ENCODE measurements at regions of chr12 and their contacts with region 1.

Region 1: DNA sequence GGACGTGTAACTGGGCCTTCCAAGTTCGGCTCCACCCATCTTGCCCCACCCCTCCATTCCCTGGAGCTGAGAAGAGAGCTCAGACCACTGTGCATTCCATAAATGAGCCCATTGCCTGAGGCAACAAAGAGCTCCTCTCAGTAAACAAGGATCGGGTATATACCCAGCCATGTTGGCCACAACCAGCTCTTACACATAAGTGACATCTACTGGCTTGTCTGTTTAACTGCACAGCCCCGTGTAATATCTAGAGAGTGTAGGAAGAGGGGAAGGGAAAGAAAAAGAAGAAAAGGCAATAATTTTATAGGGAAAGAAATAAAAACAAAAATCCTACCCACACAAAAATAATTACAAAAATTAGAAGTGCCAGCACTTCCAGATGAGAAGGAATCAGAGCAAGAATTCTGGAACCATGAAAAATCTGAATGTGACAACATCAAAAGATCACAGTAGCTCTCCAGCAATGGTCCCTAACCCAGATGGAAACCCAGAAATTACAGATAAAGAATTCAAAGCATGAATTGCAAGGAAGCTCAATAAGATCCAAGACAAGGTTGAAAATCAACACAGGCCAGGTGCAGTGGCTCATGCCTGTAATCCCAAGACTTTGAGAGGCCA is 308.1 kb downstream of the RPAP3 start:
- DNase-seq: peak; percentile 14 to 69 (median 56)
- H3K4me3 ChIP-seq: peak overlapping the region; percentile 17
- H3K4me3 Mint-ChIP-seq: peak overlapping the region in 6 of 7 donors; percentile 60 to 84 (median 72)
- H3K27ac ChIP-seq: no peak overlapping the region
- H3K27ac Mint-ChIP-seq: peak overlapping the region; percentile 76 to 99 (median 95)
- H3K4me1 ChIP-seq: peaks cover 38% of the 10 kb centered on the region
- H3K4me1 Mint-ChIP-seq: peaks cover 46 to 62% (median 56%) of the 10 kb centered on the region in 3 donors
- H3K27me3 ChIP-seq: no peaks in the 10 kb centered on the region
- H3K27me3 Mint-ChIP-seq: no peaks in the 10 kb centered on the region

Region 2: GRCh38 chr12:47032644-47033043 is 365.1 kb before region 1 on chr12:
- CTCF ChIA-PET with region 1: interaction called, 72 read pairs
- POLR2A ChIA-PET with region 1: interaction called, 4 read pairs
- DNase-seq: peak in 2 of 5 donors; percentile 55 to 56
- H3K4me3 ChIP-seq: no peak overlapping the region
- H3K4me3 Mint-ChIP-seq: no peak overlapping the region
- H3K27ac ChIP-seq: no peak overlapping the region
- H3K27ac Mint-ChIP-seq: peak overlapping the region in 1 of 8 donors; percentile 20
- H3K4me1 ChIP-seq: peaks cover 4% of the 10 kb centered on the region
- H3K4me1 Mint-ChIP-seq: peaks cover 17 to 19% (median 19%) of the 10 kb centered on the region in 3 donors
- H3K27me3 ChIP-seq: no peaks in the 10 kb centered on the region
- H3K27me3 Mint-ChIP-seq: peaks cover 1 to 3% of the 10 kb centered on the region in 2 donors

Region 3: GRCh38 chr12:47190271-47190750 is 207.5 kb before region 1 on chr12:
- CTCF ChIA-PET with region 1: interaction called, 24 read pairs
- POLR2A ChIA-PET with region 1: interaction called, 5 read pairs
- DNase-seq: no peak
- H3K4me3 ChIP-seq: peak overlapping the region; percentile 11
- H3K4me3 Mint-ChIP-seq: peak overlapping the region; percentile 12 to 90 (median 59)
- H3K27ac ChIP-seq: no peak overlapping the region
- H3K27ac Mint-ChIP-seq: peak overlapping the region; percentile 93 to 97 (median 96)
- H3K4me1 ChIP-seq: peaks cover 81% of the 10 kb centered on the region
- H3K4me1 Mint-ChIP-seq: peaks cover 78 to 92% (median 89%) of the 10 kb centered on the region in 3 donors
- H3K27me3 ChIP-seq: no peaks in the 10 kb centered on the region
- H3K27me3 Mint-ChIP-seq: peaks cover 0 to 2% of the 10 kb centered on the region in 2 donors

Region 4: GRCh38 chr12:47228802-47229201 is 169.0 kb before region 1 on chr12:
- CTCF ChIA-PET with region 1: interaction called, 12 read pairs
- POLR2A ChIA-PET with region 1: interaction called, 4 read pairs
- DNase-seq: no peak
- H3K4me3 ChIP-seq: no peak overlapping the region
- H3K4me3 Mint-ChIP-seq: peak overlapping the region in 2 of 7 donors; percentile 11 to 24
- H3K27ac ChIP-seq: no peak overlapping the region
- H3K27ac Mint-ChIP-seq: peak overlapping the region in 7 of 8 donors; percentile 23 to 88 (median 80)
- H3K4me1 ChIP-seq: peaks cover 65% of the 10 kb centered on the region
- H3K4me1 Mint-ChIP-seq: peaks cover 70 to 86% (median 85%) of the 10 kb centered on the region in 3 donors
- H3K27me3 ChIP-seq: no peaks in the 10 kb centered on the region
- H3K27me3 Mint-ChIP-seq: no peaks in the 10 kb centered on the region

Region 5: DNA sequence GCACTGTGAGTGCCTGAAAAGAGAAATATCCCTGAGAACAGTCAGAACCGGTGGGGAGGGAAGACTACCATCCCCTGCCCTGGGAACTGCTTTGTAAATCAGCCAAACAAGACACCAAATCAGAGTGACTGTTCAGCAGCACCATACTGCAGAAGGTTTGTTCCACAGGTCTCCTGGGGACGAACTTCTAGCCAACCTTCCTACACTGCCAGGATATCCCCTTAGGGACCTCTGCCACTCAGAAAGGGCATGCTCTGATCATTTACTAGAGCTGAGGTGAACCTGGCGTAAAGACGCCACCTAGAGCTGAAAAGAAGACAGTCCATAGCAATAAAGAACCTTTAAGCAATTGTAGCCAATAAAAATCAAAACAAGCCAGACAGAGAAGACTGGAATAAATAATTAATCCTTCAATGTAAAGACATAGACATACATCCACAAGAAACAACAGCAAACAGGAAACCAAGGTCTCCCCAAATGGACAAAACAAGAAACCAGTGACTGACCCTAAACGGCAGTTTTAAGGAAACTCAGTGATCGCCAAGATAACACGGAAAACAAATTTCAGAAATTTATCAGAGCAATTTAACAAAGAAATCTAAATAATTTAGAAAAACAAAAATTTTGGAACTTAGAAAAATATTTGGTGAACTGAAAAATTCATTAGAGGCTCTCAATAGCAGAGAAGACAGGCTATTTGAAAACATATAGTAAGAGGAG is 89.9 kb before region 1 on chr12:
- CTCF ChIA-PET with region 1: interaction called, 31 read pairs
- POLR2A ChIA-PET with region 1: interaction called, 4 read pairs
- DNase-seq: peak in 3 of 5 donors; percentile 56 to 72 (median 57)
- H3K4me3 ChIP-seq: peak overlapping the region; percentile 67
- H3K4me3 Mint-ChIP-seq: peak overlapping the region; percentile 29 to 92 (median 86)
- H3K27ac ChIP-seq: no peak overlapping the region
- H3K27ac Mint-ChIP-seq: peak overlapping the region; percentile 62 to 93 (median 90)
- H3K4me1 ChIP-seq: peaks cover 14% of the 10 kb centered on the region
- H3K4me1 Mint-ChIP-seq: peaks cover 36 to 48% (median 41%) of the 10 kb centered on the region in 3 donors
- H3K27me3 ChIP-seq: no peaks in the 10 kb centered on the region
- H3K27me3 Mint-ChIP-seq: no peaks in the 10 kb centered on the region

Region 6: GRCh38 chr12:47361389-47362021 is 36.3 kb before region 1 on chr12:
- CTCF ChIA-PET with region 1: interaction called, 15 read pairs
- POLR2A ChIA-PET with region 1: no interaction called
- DNase-seq: peak; percentile 11 to 50 (median 30)
- H3K4me3 ChIP-seq: peak overlapping the region; percentile 58
- H3K4me3 Mint-ChIP-seq: peak overlapping the region; percentile 75 to 95 (median 85)
- H3K27ac ChIP-seq: peak overlapping the region; percentile 76
- H3K27ac Mint-ChIP-seq: peak overlapping the region; percentile 93 to 100 (median 97)
- H3K4me1 ChIP-seq: peaks cover 67% of the 10 kb centered on the region
- H3K4me1 Mint-ChIP-seq: peaks cover 57 to 70% (median 60%) of the 10 kb centered on the region in 3 donors
- H3K27me3 ChIP-seq: no peaks in the 10 kb centered on the region
- H3K27me3 Mint-ChIP-seq: peaks cover 0 to 2% of the 10 kb centered on the region in 2 donors

Region 7: GRCh38 chr12:47504775-47505446 is 107.1 kb after region 1 on chr12:
- CTCF ChIA-PET with region 1: no interaction called
- POLR2A ChIA-PET with region 1: no interaction called
- DNase-seq: no peak
- H3K4me3 ChIP-seq: no peak overlapping the region
- H3K4me3 Mint-ChIP-seq: no peak overlapping the region
- H3K27ac ChIP-seq: no peak overlapping the region
- H3K27ac Mint-ChIP-seq: no peak overlapping the region
- H3K4me1 ChIP-seq: no peaks in the 10 kb centered on the region
- H3K4me1 Mint-ChIP-seq: no peaks in the 10 kb centered on the region
- H3K27me3 ChIP-seq: no peaks in the 10 kb centered on the region
- H3K27me3 Mint-ChIP-seq: peaks cover 11 to 24% of the 10 kb centered on the region in 2 donors

Region 8: DNA sequence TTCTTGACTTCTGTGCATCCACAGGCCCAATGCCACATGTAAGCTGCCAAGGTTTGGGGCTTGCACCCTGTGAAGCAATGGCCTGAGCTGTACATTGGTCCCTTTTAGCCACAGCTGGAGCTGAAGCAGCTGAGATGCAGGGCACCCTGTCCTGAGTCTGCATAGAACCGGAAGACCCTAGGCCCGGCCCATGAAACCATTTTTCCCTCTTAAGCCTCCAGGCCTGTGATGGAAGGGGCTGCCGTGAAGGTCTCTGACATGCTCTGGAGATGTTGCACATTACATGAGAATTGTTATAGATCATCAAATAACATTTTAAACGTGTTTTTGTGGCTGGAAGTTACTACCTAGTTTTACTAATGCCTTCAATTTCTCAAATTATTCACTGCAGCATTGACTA is 119.3 kb after region 1 on chr12:
- CTCF ChIA-PET with region 1: no interaction called
- POLR2A ChIA-PET with region 1: no interaction called
- DNase-seq: no peak
- H3K4me3 ChIP-seq: no peak overlapping the region
- H3K4me3 Mint-ChIP-seq: no peak overlapping the region
- H3K27ac ChIP-seq: no peak overlapping the region
- H3K27ac Mint-ChIP-seq: no peak overlapping the region
- H3K4me1 ChIP-seq: no peaks in the 10 kb centered on the region
- H3K4me1 Mint-ChIP-seq: no peaks in the 10 kb centered on the region
- H3K27me3 ChIP-seq: no peaks in the 10 kb centered on the region
- H3K27me3 Mint-ChIP-seq: no peaks in the 10 kb centered on the region

Region 9: DNA sequence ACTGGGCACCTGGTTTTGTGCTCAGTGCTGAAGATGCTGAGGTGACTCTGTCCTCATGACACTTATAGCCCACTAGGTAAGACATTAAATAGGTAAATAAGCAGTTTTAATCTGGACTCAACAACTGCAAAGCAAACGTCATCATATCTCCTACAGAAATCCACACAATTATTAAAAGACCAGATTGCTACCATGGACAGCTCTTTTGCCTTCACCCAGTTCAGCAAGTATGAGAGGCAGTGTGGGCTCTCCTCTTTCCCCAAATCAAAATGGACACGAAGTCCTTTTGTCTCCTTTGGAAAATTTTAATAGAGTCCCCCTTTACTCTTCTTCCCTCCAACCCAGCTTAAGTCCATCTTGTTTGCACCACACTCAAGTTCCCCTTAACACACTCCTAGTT is 136.9 kb after region 1 on chr12:
- CTCF ChIA-PET with region 1: no interaction called
- POLR2A ChIA-PET with region 1: no interaction called
- DNase-seq: no peak
- H3K4me3 ChIP-seq: no peak overlapping the region
- H3K4me3 Mint-ChIP-seq: no peak overlapping the region
- H3K27ac ChIP-seq: no peak overlapping the region
- H3K27ac Mint-ChIP-seq: no peak overlapping the region
- H3K4me1 ChIP-seq: no peaks in the 10 kb centered on the region
- H3K4me1 Mint-ChIP-seq: no peaks in the 10 kb centered on the region
- H3K27me3 ChIP-seq: no peaks in the 10 kb centered on the region
- H3K27me3 Mint-ChIP-seq: peaks cover 33 to 56% of the 10 kb centered on the region in 2 donors

Region 10: DNA sequence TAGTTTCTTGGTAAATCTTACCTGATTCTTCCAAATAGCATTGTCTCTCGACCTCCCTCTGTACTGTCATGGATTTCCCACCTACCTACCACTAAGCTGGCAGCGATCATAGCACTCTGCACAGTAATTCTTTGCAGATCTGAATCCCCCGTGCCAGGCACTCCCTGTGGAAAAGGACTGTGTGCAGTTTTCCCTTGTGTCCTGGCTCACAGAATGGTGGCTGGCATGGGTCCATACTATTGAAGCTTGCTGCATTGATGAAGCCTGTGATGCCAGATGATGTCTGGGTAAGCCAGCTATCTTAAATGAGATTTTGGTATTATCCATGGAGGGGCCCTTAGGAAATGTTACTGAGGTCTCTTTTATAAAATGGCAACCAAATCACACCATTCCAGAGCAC is 172.4 kb after region 1 on chr12:
- CTCF ChIA-PET with region 1: no interaction called
- POLR2A ChIA-PET with region 1: no interaction called
- DNase-seq: no peak
- H3K4me3 ChIP-seq: no peak overlapping the region
- H3K4me3 Mint-ChIP-seq: no peak overlapping the region
- H3K27ac ChIP-seq: no peak overlapping the region
- H3K27ac Mint-ChIP-seq: peak overlapping the region in 1 of 8 donors; percentile 47
- H3K4me1 ChIP-seq: no peaks in the 10 kb centered on the region
- H3K4me1 Mint-ChIP-seq: no peaks in the 10 kb centered on the region
- H3K27me3 ChIP-seq: peaks cover 3% of the 10 kb centered on the region
- H3K27me3 Mint-ChIP-seq: peaks cover 5 to 8% of the 10 kb centered on the region in 2 donors

Measured in CD8-positive, alpha-beta memory T cell (primary cell).